ENCODE measurements at regions of chr1 and their contacts with region 1.

Region 1: GRCh38 chr1:206583707-206584648 is 28.3 kb downstream of the EIF2D start:
- DNase-seq: peak; percentile 91
- ATAC-seq: peak; percentile 22
- H3K4me3 Mint-ChIP-seq: peak overlapping the region; percentile 76
- H3K27ac Mint-ChIP-seq: peak overlapping the region; percentile 100
- H3K4me1 Mint-ChIP-seq: peaks cover 88% of the 10 kb centered on the region
- H3K27me3 Mint-ChIP-seq: no peaks in the 10 kb centered on the region
- CTCF ChIP-seq: peak; percentile 96

Region 2: GRCh38 chr1:206479183-206480125 is 104.5 kb before region 1 on chr1:
- CTCF ChIA-PET with region 1: interaction called, 24 read pairs
- POLR2A ChIA-PET with region 1: interaction called, 5 read pairs
- intact Hi-C with region 1: no loop called
- DNase-seq: peak; percentile 91
- ATAC-seq: peak; percentile 87
- H3K4me3 Mint-ChIP-seq: no peak overlapping the region
- H3K27ac Mint-ChIP-seq: peak overlapping the region; percentile 60
- H3K4me1 Mint-ChIP-seq: peaks cover 33% of the 10 kb centered on the region
- H3K27me3 Mint-ChIP-seq: no peaks in the 10 kb centered on the region
- CTCF ChIP-seq: peak; percentile 79

Region 3: GRCh38 chr1:206507284-206508129 is 76.5 kb before region 1 on chr1 and contains the start of gene RASSF5:
- CTCF ChIA-PET with region 1: interaction called, 13 read pairs
- POLR2A ChIA-PET with region 1: interaction called, 8 read pairs
- intact Hi-C with region 1: loop called (anchors 5 kb)
- DNase-seq: peak; percentile 91
- ATAC-seq: peak; percentile 75
- H3K4me3 Mint-ChIP-seq: peak within 1 kb of the TSS; percentile 64
- H3K27ac Mint-ChIP-seq: peak within 1 kb of the TSS; percentile 10
- H3K4me1 Mint-ChIP-seq: peaks cover 46% of the 10 kb centered on the region
- H3K27me3 Mint-ChIP-seq: peaks cover 28% of the 10 kb centered on the region
- CTCF ChIP-seq: no peak
- total RNA-seq, gene RASSF5: 215 to 218 TPM

Region 4: DNA sequence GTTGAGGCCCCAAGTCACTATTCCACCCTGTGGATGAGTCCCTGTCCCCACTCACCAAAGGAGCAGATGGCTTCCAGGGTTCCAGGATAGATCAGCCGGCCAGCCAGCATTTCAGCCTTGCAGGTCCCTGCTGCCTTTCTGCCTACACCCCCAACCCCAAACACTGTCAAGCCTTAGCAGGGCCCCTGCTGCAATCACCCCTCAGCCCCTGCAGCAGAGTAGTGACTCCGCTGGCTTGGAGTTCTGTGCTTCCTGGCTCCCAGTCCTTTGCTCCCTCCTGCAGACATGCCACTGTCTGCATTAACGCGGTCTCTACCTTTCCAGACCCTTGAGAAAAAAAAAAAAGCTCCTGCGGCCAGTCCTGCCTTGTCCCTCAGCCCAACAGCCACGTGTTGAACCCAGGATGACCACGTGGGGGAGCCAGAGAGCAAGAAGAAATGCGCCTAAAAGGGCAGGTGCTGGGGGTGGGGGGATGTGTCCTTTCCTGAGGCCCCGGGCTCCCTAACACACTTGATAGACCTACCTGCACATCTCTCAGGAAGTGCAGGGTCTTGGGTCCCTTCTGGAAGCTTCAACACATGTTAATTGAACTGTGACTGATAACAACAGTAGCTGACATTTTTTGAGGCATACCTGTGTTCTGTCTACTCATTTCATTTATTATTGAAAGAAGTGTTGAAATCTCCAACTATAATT is 39.3 kb before region 1 on chr1:
- CTCF ChIA-PET with region 1: interaction called, 583 read pairs
- POLR2A ChIA-PET with region 1: interaction called, 1,021 read pairs
- intact Hi-C with region 1: loop called (anchors 2 kb)
- DNase-seq: peak; percentile 87
- ATAC-seq: peak; percentile 91
- H3K4me3 Mint-ChIP-seq: no peak overlapping the region
- H3K27ac Mint-ChIP-seq: peak overlapping the region; percentile 57
- H3K4me1 Mint-ChIP-seq: peaks cover 25% of the 10 kb centered on the region
- H3K27me3 Mint-ChIP-seq: no peaks in the 10 kb centered on the region
- CTCF ChIP-seq: peak; percentile 94

Region 5: DNA sequence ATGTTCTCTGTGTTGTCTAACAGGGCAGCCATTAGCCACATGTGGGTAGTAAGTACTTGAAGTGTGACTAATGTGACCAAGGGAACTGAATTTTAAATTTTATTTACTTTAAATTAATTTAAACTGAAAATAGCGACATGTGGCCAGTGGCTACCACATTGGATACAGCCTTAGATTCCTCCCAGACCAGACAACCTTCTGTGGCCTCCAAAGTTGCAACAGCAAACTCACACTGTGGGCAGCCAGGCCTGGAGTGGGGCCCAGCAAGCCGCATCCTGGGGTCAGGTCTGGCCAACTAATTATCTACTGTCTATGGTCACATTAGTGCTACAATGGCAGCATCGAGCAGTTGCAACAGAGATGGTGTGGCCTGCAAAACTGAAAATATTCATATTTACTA is 16.5 kb after region 1 on chr1:
- CTCF ChIA-PET with region 1: interaction called, 18 read pairs
- POLR2A ChIA-PET with region 1: interaction called, 3 read pairs
- intact Hi-C with region 1: no loop called
- DNase-seq: no peak
- ATAC-seq: no peak
- H3K4me3 Mint-ChIP-seq: no peak overlapping the region
- H3K27ac Mint-ChIP-seq: no peak overlapping the region
- H3K4me1 Mint-ChIP-seq: peaks cover 2% of the 10 kb centered on the region
- H3K27me3 Mint-ChIP-seq: no peaks in the 10 kb centered on the region
- CTCF ChIP-seq: no peak

Region 6: GRCh38 chr1:206725109-206725963 is 141.4 kb after region 1 on chr1:
- CTCF ChIA-PET with region 1: no interaction called
- POLR2A ChIA-PET with region 1: no interaction called
- intact Hi-C with region 1: no loop called
- DNase-seq: peak; percentile 83
- ATAC-seq: peak; percentile 57
- H3K4me3 Mint-ChIP-seq: no peak overlapping the region
- H3K27ac Mint-ChIP-seq: no peak overlapping the region
- H3K4me1 Mint-ChIP-seq: peaks cover 57% of the 10 kb centered on the region
- H3K27me3 Mint-ChIP-seq: no peaks in the 10 kb centered on the region
- CTCF ChIP-seq: peak; percentile 6

Measured in activated CD8-positive, alpha-beta T cell treated with anti-CD3 and anti-CD28 coated beads for 36 hours (primary cell).